K562 (cell line): ENCODE measurements at regions of chr3 and their contacts with region 1.

Region 1: DNA sequence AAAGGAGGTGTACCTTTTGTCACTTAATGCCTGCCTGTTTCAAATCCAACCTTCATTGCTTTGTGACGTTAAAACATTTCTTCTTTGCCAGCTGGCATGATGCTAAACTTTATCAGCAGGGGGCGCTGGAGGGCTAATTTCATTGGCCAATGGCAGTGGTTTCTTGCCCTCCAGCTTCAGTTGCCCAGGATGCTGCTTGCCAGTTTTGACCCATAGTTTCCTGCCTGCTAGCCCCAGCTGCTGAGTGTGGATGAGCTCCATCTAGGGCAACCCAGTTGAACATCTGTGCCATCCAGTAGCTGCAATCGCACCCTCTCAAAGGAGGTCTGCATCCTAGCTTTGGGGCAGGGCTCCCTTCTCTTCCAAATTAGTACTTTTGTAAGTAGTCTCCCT is 22.1 kb downstream of the ACKR2 start:
- DNase-seq: peak; percentile 69 to 83 (median 75)
- ATAC-seq: peak; percentile 87
- H3K4me3 ChIP-seq: no peak overlapping the region
- H3K27ac ChIP-seq: no peak overlapping the region
- H3K4me1 ChIP-seq: peaks cover 6 to 9% of the 10 kb centered on the region in 2 experiments; a peak in 4 of 5 replicates
- H3K27me3 ChIP-seq: no peaks in the 10 kb centered on the region; a peak in 1 of 5 replicates
- CTCF ChIP-seq: peak; percentile 88 to 95 (median 93)
- EP300 ChIP-seq: no peak
- POLR2A ChIP-seq: no peak
- RAD21 ChIP-seq: peak; percentile 94 to 97

Region 2: GRCh38 chr3:42502429-42503250 is 328.7 kb before region 1 on chr3 and contains the start of gene VIPR1:
- CTCF ChIA-PET with region 1: no interaction called
- POLR2A ChIA-PET with region 1: no interaction called
- in situ Hi-C with region 1: no loop called
- intact Hi-C with region 1: loop called (anchors 5 kb)
- DNase-seq: peak; percentile 83 to 100 (median 99)
- ATAC-seq: peak; percentile 96
- H3K4me3 ChIP-seq: peak within 1 kb of the TSS; percentile 54
- H3K27ac ChIP-seq: no peak within 1 kb of the TSS
- H3K4me1 ChIP-seq: peaks cover 4 to 27% of the 10 kb centered on the region in 2 experiments; a peak in 4 of 5 replicates
- H3K27me3 ChIP-seq: peaks cover 23 to 52% of the 10 kb centered on the region in 2 experiments
- CTCF ChIP-seq: no peak
- EP300 ChIP-seq: no peak
- POLR2A ChIP-seq: no peak
- RAD21 ChIP-seq: no peak
- polyA plus RNA-seq, gene VIPR1: not detected

Region 3: GRCh38 chr3:42660893-42661292 is 170.4 kb before region 1 on chr3:
- CTCF ChIA-PET with region 1: interaction called, 3 read pairs
- POLR2A ChIA-PET with region 1: no interaction called
- in situ Hi-C with region 1: no loop called
- intact Hi-C with region 1: loop called (anchors 2 kb)
- DNase-seq: peak; percentile 60 to 78 (median 70)
- ATAC-seq: peak; percentile 78
- H3K4me3 ChIP-seq: no peak overlapping the region
- H3K27ac ChIP-seq: no peak overlapping the region
- H3K4me1 ChIP-seq: peaks cover 0 to 24% of the 10 kb centered on the region in 2 experiments; a peak in 1 of 5 replicates
- H3K27me3 ChIP-seq: no peaks in the 10 kb centered on the region
- CTCF ChIP-seq: peak; percentile 78 to 97 (median 97)
- EP300 ChIP-seq: no peak
- POLR2A ChIP-seq: no peak
- RAD21 ChIP-seq: peak; percentile 68 to 84

Region 4: GRCh38 chr3:42780892-42781700 is 50.2 kb before region 1 on chr3:
- CTCF ChIA-PET with region 1: interaction called, 61 read pairs
- POLR2A ChIA-PET with region 1: interaction called, 3 read pairs
- in situ Hi-C with region 1: loop called (anchors 5 kb)
- intact Hi-C with region 1: loop called (anchors 1 kb)
- DNase-seq: peak; percentile 61 to 81 (median 70)
- ATAC-seq: peak; percentile 95
- H3K4me3 ChIP-seq: no peak overlapping the region
- H3K27ac ChIP-seq: no peak overlapping the region
- H3K4me1 ChIP-seq: peaks cover 4 to 6% of the 10 kb centered on the region in 2 experiments; a peak in 2 of 5 replicates
- H3K27me3 ChIP-seq: no peaks in the 10 kb centered on the region
- CTCF ChIP-seq: peak; percentile 77 to 92 (median 77); a peak in 5 of 6 replicates
- EP300 ChIP-seq: no peak
- POLR2A ChIP-seq: no peak
- RAD21 ChIP-seq: peak; percentile 91 to 93

Region 5: DNA sequence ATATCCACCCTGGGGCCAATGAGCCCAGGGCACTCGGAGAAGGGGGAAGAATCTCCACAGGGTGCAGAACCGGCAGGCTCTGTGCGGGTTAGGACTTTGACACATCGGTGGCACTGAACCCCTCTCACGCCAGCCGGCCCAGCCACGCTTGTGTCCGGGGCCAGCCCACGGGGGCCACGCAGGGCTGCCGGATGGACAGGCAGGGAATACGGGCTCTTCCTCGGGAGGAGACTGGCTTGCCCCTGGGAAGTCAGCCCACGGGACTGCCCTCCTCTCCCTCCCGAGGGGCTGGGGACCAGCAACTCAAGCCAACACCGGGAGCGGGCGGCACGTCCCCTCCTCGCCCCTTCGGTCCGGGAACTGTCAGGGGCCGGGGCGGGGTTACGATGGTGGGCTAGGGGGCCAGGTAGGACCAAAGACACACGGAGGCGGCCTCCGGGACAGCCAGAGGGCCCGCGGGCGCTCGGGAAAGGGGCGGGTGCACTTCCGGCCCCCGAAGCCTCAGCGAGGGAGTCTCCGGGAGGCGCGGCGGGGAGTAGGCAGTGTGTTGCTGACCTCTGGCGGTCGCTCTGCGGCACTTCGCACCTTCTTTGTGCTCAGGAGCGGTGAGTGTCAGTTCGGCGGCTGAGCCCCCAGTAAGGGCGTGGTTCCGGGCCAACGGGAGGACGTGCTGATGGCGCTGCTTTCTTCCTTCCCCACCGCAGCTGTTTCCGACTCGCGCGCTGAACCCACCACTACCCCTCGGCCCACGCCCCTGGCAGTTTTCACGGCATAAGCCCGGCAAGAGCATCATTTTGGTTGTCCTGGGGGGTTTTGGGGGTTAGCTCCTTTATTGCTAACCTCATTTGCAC is 49.5 kb after region 1 on chr3:
- CTCF ChIA-PET with region 1: interaction called, 56 read pairs
- POLR2A ChIA-PET with region 1: interaction called, 4 read pairs
- in situ Hi-C with region 1: no loop called
- intact Hi-C with region 1: loop called (anchors 1 kb)
- DNase-seq: peak; percentile 94 to 97 (median 95)
- ATAC-seq: peak; percentile 100
- H3K4me3 ChIP-seq: peak overlapping the region; percentile 42
- H3K27ac ChIP-seq: no peak overlapping the region
- H3K4me1 ChIP-seq: peaks cover 0 to 12% of the 10 kb centered on the region in 2 experiments; a peak in 3 of 5 replicates
- H3K27me3 ChIP-seq: peaks cover 3 to 15% of the 10 kb centered on the region in 2 experiments; a peak in 3 of 5 replicates
- CTCF ChIP-seq: peak; percentile 96 to 98 (median 96)
- EP300 ChIP-seq: no peak; the same call in 1 of the 2 replicates
- POLR2A ChIP-seq: peak; percentile 40
- RAD21 ChIP-seq: peak; percentile 99 to 100